ENCODE measurements at regions of chr15 and their contacts with region 1.

Region 1: GRCh38 chr15:34367101-34368081 is at the start of gene LPCAT4:
- DNase-seq: peak; percentile 82 to 96 (median 88)
- ATAC-seq: peak; percentile 84
- H3K4me3 ChIP-seq: peak within 1 kb of the TSS; percentile 94
- H3K4me3 Mint-ChIP-seq: peak within 1 kb of the TSS; percentile 97
- H3K27ac ChIP-seq: peak within 1 kb of the TSS; percentile 80 to 88
- H3K27ac Mint-ChIP-seq: peak within 1 kb of the TSS; percentile 92
- H3K4me1 ChIP-seq: peaks cover 40% of the 10 kb centered on the region
- H3K4me1 Mint-ChIP-seq: peaks cover 43% of the 10 kb centered on the region
- H3K27me3 ChIP-seq: no peaks in the 10 kb centered on the region
- H3K27me3 Mint-ChIP-seq: no peaks in the 10 kb centered on the region
- CTCF ChIP-seq: peak; percentile 90
- total RNA-seq, gene LPCAT4: 41.0 to 45.2 TPM

Region 2: GRCh38 chr15:34055853-34056595 is 311.4 kb before region 1 on chr15:
- CTCF ChIA-PET with region 1: no interaction called
- POLR2A ChIA-PET with region 1: no interaction called
- intact Hi-C with region 1: loop called in 1 of 2 experiments (anchors 2 kb)
- DNase-seq: no peak
- ATAC-seq: no peak
- H3K4me3 ChIP-seq: no peak overlapping the region
- H3K4me3 Mint-ChIP-seq: no peak overlapping the region
- H3K27ac ChIP-seq: no peak overlapping the region
- H3K27ac Mint-ChIP-seq: no peak overlapping the region
- H3K4me1 ChIP-seq: no peaks in the 10 kb centered on the region
- H3K4me1 Mint-ChIP-seq: no peaks in the 10 kb centered on the region
- H3K27me3 ChIP-seq: no peaks in the 10 kb centered on the region
- H3K27me3 Mint-ChIP-seq: no peaks in the 10 kb centered on the region
- CTCF ChIP-seq: no peak

Region 3: GRCh38 chr15:34241372-34242330 is 125.7 kb before region 1 on chr15:
- CTCF ChIA-PET with region 1: interaction called, 51 read pairs
- POLR2A ChIA-PET with region 1: interaction called, 39 read pairs
- intact Hi-C with region 1: loop called (anchors 1 kb)
- DNase-seq: peak in 9 of 14 experiments; percentile 7 to 77 (median 25)
- ATAC-seq: peak; percentile 99
- H3K4me3 ChIP-seq: no peak overlapping the region
- H3K4me3 Mint-ChIP-seq: no peak overlapping the region
- H3K27ac ChIP-seq: no peak overlapping the region
- H3K27ac Mint-ChIP-seq: peak overlapping the region; percentile 22
- H3K4me1 ChIP-seq: no peaks in the 10 kb centered on the region
- H3K4me1 Mint-ChIP-seq: peaks cover 4% of the 10 kb centered on the region
- H3K27me3 ChIP-seq: no peaks in the 10 kb centered on the region
- H3K27me3 Mint-ChIP-seq: no peaks in the 10 kb centered on the region
- CTCF ChIP-seq: peak; percentile 93

Region 4: GRCh38 chr15:34318277-34319079 is 48.9 kb before region 1 on chr15:
- CTCF ChIA-PET with region 1: interaction called, 9 read pairs
- POLR2A ChIA-PET with region 1: interaction called, 10 read pairs
- intact Hi-C with region 1: no loop called
- DNase-seq: peak in 7 of 14 experiments; percentile 12 to 62 (median 45)
- ATAC-seq: peak; percentile 85
- H3K4me3 ChIP-seq: peak overlapping the region; percentile 69
- H3K4me3 Mint-ChIP-seq: peak overlapping the region; percentile 99
- H3K27ac ChIP-seq: peak overlapping the region; percentile 11 to 38
- H3K27ac Mint-ChIP-seq: peak overlapping the region; percentile 97
- H3K4me1 ChIP-seq: peaks cover 16% of the 10 kb centered on the region
- H3K4me1 Mint-ChIP-seq: peaks cover 74% of the 10 kb centered on the region
- H3K27me3 ChIP-seq: no peaks in the 10 kb centered on the region
- H3K27me3 Mint-ChIP-seq: no peaks in the 10 kb centered on the region
- CTCF ChIP-seq: no peak

Region 5: GRCh38 chr15:34342737-34343575 is 24.4 kb before region 1 on chr15 and contains the starts of genes NOP10 and NUTM1:
- CTCF ChIA-PET with region 1: interaction called, 49 read pairs
- POLR2A ChIA-PET with region 1: interaction called, 72 read pairs
- intact Hi-C with region 1: loop called (anchors 1 kb)
- DNase-seq: peak; percentile 86 to 96 (median 92)
- ATAC-seq: peak; percentile 85
- H3K4me3 ChIP-seq: peak within 1 kb of the TSS; percentile 89
- H3K4me3 Mint-ChIP-seq: peak within 1 kb of the TSS; percentile 88
- H3K27ac ChIP-seq: peak within 1 kb of the TSS; percentile 85 to 87
- H3K27ac Mint-ChIP-seq: peak within 1 kb of the TSS; percentile 84
- H3K4me1 ChIP-seq: peaks cover 23% of the 10 kb centered on the region
- H3K4me1 Mint-ChIP-seq: peaks cover 17% of the 10 kb centered on the region
- H3K27me3 ChIP-seq: no peaks in the 10 kb centered on the region
- H3K27me3 Mint-ChIP-seq: no peaks in the 10 kb centered on the region
- CTCF ChIP-seq: peak; percentile 94
- total RNA-seq, gene NOP10: 44.4 to 44.8 TPM
- total RNA-seq, gene NUTM1: not detected

Region 6: GRCh38 chr15:34969340-34970097 is 602.1 kb after region 1 on chr15 and contains the start of gene AQR:
- CTCF ChIA-PET with region 1: no interaction called
- POLR2A ChIA-PET with region 1: no interaction called
- intact Hi-C with region 1: loop called in 1 of 2 experiments (anchors 5 kb)
- DNase-seq: peak; percentile 83 to 98 (median 88)
- ATAC-seq: peak; percentile 96
- H3K4me3 ChIP-seq: peak within 1 kb of the TSS; percentile 99
- H3K4me3 Mint-ChIP-seq: peak within 1 kb of the TSS; percentile 98
- H3K27ac ChIP-seq: peak within 1 kb of the TSS; percentile 71 to 83
- H3K27ac Mint-ChIP-seq: peak within 1 kb of the TSS; percentile 92
- H3K4me1 ChIP-seq: peaks cover 30% of the 10 kb centered on the region
- H3K4me1 Mint-ChIP-seq: peaks cover 58% of the 10 kb centered on the region
- H3K27me3 ChIP-seq: no peaks in the 10 kb centered on the region
- H3K27me3 Mint-ChIP-seq: no peaks in the 10 kb centered on the region
- CTCF ChIP-seq: peak; percentile 82
- total RNA-seq, gene AQR: 40.4 to 40.7 TPM

Measured in CD4-positive, alpha-beta T cell (primary cell).